Activated T-helper 2 cell treated with anti-CD3 and anti-CD28 coated beads, Interferon-gamma antibody, Interleukin-2, Interleukin-4, amounts not matched to agents 10 μg/mL and 5 μg/mL and 100 μg/mL, durations not matched to agents 14 hours and 24 hours and 36 hours (primary cell): ENCODE measurements at regions of chr5 and their contacts with region 1.

Region 1: GRCh38 chr5:178551059-178551458 is 39.1 kb downstream of the COL23A1 start:
- DNase-seq: no peak
- H3K4me3 Mint-ChIP-seq: no peak overlapping the region
- H3K27ac Mint-ChIP-seq: no peak overlapping the region
- H3K4me1 Mint-ChIP-seq: no peaks in the 10 kb centered on the region
- H3K27me3 Mint-ChIP-seq: no peaks in the 10 kb centered on the region

Region 2: DNA sequence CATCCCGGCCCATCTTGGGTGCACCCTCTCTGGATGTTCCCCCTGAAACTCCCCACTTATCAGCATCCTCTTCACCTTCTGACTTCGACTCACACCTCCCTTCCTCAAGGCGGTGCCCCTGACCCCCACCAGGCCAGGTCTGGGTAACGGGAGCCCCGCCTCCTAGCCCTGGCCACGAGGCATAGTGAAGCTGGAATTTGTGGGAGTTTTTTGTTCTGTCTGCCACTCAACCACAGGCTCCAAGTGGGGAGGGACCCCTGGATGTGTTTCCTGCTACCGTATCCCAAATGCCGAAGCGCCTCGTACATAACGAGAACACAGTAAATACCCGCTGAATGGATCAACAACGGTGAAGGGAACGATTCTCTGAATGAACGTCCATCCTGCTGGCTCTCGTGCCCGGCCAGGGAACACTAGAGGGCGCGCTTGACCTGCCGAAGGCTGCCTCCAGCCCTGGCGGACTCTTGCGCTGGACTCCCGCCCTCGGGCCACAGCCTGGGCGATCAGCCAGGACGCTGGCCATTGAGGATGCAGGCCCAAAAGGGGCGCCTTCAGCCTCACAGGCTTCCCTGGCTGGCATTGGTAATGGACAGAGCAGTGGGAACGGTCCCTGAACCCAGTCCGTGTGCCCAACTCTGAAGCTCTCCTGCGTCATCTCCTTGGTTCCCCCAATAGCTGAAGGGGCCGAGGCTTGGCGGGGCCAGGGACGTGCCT is 271.2 kb before region 1 on chr5:
- intact Hi-C with region 1: loop called (anchors 5 kb)
- DNase-seq: peak; percentile 34
- H3K4me3 Mint-ChIP-seq: no peak overlapping the region
- H3K27ac Mint-ChIP-seq: no peak overlapping the region
- H3K4me1 Mint-ChIP-seq: peaks cover 2% of the 10 kb centered on the region
- H3K27me3 Mint-ChIP-seq: peaks cover 2% of the 10 kb centered on the region